Activated CD4-positive, alpha-beta T cell treated with anti-CD3 and anti-CD28 coated beads for 36 hours (primary cell): ENCODE measurements at regions of chr7 and their contacts with region 1.

Region 1: DNA sequence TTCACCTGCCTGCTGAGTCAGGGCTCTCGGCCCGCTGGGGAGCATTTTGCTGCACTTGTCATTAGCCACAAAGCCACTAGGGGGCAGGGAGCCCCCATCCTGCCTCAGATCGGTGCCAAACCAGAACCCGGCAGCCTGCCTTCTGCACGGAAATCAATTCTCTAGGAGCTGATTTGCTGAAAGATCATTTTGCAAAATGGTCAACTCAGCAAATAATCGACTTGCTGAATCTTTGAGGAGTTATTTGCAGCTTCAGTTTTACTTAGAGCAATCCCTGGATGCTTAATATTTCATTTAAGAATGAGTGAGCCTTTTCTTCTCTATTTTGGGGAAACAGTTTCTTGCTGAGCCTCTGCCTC is 1.7 kb upstream of the GIMAP8 start:
- DNase-seq: peak; percentile 95
- ATAC-seq: peak; percentile 41
- H3K4me3 Mint-ChIP-seq: peak overlapping the region; percentile 91
- H3K27ac Mint-ChIP-seq: peak overlapping the region; percentile 96
- H3K4me1 Mint-ChIP-seq: peaks cover 51% of the 10 kb centered on the region
- H3K27me3 Mint-ChIP-seq: no peaks in the 10 kb centered on the region

Region 2: GRCh38 chr7:150481186-150481920 is 32.6 kb after region 1 on chr7:
- CTCF ChIA-PET with region 1: interaction called, 14 read pairs
- POLR2A ChIA-PET with region 1: interaction called, 3 read pairs
- intact Hi-C with region 1: loop called (anchors 1 to 2 kb)
- DNase-seq: peak; percentile 56
- ATAC-seq: peak; percentile 70
- H3K4me3 Mint-ChIP-seq: peak overlapping the region; percentile 67
- H3K27ac Mint-ChIP-seq: peak overlapping the region; percentile 100
- H3K4me1 Mint-ChIP-seq: peaks cover 97% of the 10 kb centered on the region
- H3K27me3 Mint-ChIP-seq: no peaks in the 10 kb centered on the region

Region 3: DNA sequence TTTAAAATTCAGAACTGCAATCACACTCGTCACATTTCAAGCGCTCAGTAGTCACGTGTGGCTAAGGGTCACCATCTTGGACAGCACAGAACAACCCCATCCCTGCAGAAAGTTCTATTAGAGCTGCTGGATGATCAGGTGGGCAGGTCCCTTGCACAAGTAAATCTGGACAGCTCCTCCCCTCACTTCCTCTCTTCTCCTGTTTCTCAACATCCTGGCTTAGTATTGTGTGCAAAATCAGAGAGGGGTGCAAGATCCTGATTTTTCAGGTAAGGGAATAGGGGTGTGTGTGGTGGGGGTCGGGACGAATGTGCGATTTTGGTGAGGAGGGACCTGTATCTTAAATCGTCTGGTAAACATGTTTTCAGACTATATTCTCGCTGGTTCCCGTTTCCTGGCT is 118.4 kb after region 1 on chr7 and contains the start of gene GIMAP4:
- CTCF ChIA-PET with region 1: interaction called, 16 read pairs
- POLR2A ChIA-PET with region 1: no interaction called
- intact Hi-C with region 1: loop called (anchors 2 kb)
- DNase-seq: peak; percentile 45
- ATAC-seq: peak; percentile 50
- H3K4me3 Mint-ChIP-seq: peak within 1 kb of the TSS; percentile 89
- H3K27ac Mint-ChIP-seq: peak within 1 kb of the TSS; percentile 99
- H3K4me1 Mint-ChIP-seq: peaks cover 67% of the 10 kb centered on the region
- H3K27me3 Mint-ChIP-seq: no peaks in the 10 kb centered on the region
- total RNA-seq, gene GIMAP4: 109 to 135 TPM

Region 4: DNA sequence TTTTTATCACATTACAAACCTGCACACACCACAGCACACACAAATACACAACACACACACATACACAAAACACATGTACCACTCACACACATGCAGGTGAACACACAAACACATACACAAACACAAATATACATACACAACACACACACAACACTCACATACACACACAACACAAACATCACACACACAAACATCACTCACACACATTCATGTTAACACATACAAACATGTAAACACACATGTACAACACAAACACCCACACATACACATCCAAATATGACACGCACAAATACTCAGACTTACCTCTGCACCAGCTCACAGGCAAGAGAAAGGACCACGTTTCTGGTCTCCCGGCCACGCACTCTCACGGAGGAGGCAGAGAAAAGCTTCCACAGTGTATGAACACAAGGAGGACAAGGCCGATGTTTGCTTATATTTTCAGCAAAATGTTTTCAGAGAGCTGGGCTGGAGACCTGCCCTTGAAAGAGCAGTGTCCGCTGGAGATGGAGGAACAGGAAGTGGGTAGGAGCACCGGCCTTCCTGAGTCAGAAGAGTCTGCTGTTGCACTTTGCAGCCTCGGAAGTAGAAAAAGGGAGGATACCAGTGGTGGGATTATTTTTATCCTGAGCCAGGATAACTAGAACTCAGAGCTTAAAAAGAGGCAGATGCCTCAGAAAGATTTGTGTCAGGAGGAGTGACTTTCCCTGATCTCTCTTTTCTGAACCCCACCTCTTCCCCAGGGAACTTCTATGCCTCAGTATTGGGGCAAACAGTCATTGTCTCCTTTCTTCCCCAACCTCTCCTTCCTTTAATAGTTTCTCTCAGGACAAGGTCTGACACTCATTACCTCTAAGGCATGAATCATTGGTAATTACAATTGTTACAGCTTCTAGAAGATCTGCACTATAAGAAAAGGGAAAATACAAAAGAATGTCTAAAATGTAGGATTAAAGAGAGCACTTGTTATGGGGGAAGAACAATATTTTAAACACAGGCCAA is 183.4 kb after region 1 on chr7 and contains the start of gene GIMAP6:
- CTCF ChIA-PET with region 1: interaction called, 4 read pairs
- POLR2A ChIA-PET with region 1: no interaction called
- intact Hi-C with region 1: loop called (anchors 2 kb)
- DNase-seq: peak; percentile 62
- ATAC-seq: peak; percentile 69
- H3K4me3 Mint-ChIP-seq: peak within 1 kb of the TSS; percentile 95
- H3K27ac Mint-ChIP-seq: peak within 1 kb of the TSS; percentile 97
- H3K4me1 Mint-ChIP-seq: peaks cover 65% of the 10 kb centered on the region
- H3K27me3 Mint-ChIP-seq: no peaks in the 10 kb centered on the region
- total RNA-seq, gene GIMAP6: 21.6 to 25.4 TPM

Region 5: GRCh38 chr7:150685219-150686029 is 236.7 kb after region 1 on chr7 and contains the start of gene GIMAP2:
- CTCF ChIA-PET with region 1: interaction called, 8 read pairs
- POLR2A ChIA-PET with region 1: no interaction called
- intact Hi-C with region 1: loop called in 1 of 2 experiments (anchors 5 kb)
- DNase-seq: peak; percentile 41
- ATAC-seq: peak; percentile 85
- H3K4me3 Mint-ChIP-seq: peak within 1 kb of the TSS; percentile 96
- H3K27ac Mint-ChIP-seq: peak within 1 kb of the TSS; percentile 100
- H3K4me1 Mint-ChIP-seq: peaks cover 75% of the 10 kb centered on the region
- H3K27me3 Mint-ChIP-seq: no peaks in the 10 kb centered on the region
- total RNA-seq, gene GIMAP2: 30.0 to 40.1 TPM

Region 6: DNA sequence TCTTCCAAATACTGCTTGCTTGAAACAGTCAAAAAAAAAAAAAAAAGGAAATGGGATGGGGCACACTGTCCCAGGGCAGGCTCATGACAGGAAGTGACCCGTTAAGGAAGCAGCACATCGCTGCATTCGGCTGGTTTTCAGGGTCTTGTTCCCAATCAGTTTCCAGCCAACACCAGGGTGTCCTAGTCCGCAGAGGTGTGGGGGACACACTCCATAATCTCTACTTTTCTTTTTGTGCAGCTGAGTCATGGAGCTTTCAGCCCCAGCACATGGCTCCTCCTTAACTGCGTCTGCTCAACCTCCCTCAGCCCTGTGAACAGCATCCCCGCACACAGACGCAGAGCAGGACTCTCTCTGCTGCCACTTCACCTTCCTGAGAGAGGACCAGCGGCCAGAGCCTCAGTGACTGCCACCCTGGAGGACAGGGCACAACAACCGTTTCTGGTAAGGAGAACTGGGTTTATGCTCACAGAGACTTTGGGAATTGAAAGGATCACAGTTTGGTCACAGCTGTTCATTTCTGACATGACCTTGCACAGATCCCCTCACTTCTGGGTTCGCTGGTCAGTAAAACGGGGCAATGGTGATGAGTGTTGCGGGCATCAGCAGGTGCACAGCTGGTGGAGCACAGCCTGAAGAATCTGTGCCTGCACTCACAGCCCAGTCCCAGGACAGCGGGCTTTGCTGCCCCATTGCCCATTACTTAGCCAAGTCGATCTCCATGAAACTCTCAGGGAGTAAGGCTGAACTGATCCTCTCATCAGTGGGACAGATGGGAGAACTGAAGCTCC is 288.7 kb after region 1 on chr7 and contains the start of gene GIMAP5:
- CTCF ChIA-PET with region 1: interaction called, 9 read pairs
- POLR2A ChIA-PET with region 1: interaction called, 7 read pairs
- intact Hi-C with region 1: loop called (anchors 1 to 5 kb)
- DNase-seq: peak; percentile 75
- ATAC-seq: peak; percentile 68
- H3K4me3 Mint-ChIP-seq: peak within 1 kb of the TSS; percentile 86
- H3K27ac Mint-ChIP-seq: peak within 1 kb of the TSS; percentile 98
- H3K4me1 Mint-ChIP-seq: peaks cover 74% of the 10 kb centered on the region
- H3K27me3 Mint-ChIP-seq: no peaks in the 10 kb centered on the region
- total RNA-seq, gene GIMAP5: 47.6 to 53.3 TPM